Activated CD8-positive, alpha-beta T cell treated with anti-CD3 and anti-CD28 coated beads for 36 hours (primary cell): ENCODE measurements at regions of chr16 and their contacts with region 1.

Region 1: DNA sequence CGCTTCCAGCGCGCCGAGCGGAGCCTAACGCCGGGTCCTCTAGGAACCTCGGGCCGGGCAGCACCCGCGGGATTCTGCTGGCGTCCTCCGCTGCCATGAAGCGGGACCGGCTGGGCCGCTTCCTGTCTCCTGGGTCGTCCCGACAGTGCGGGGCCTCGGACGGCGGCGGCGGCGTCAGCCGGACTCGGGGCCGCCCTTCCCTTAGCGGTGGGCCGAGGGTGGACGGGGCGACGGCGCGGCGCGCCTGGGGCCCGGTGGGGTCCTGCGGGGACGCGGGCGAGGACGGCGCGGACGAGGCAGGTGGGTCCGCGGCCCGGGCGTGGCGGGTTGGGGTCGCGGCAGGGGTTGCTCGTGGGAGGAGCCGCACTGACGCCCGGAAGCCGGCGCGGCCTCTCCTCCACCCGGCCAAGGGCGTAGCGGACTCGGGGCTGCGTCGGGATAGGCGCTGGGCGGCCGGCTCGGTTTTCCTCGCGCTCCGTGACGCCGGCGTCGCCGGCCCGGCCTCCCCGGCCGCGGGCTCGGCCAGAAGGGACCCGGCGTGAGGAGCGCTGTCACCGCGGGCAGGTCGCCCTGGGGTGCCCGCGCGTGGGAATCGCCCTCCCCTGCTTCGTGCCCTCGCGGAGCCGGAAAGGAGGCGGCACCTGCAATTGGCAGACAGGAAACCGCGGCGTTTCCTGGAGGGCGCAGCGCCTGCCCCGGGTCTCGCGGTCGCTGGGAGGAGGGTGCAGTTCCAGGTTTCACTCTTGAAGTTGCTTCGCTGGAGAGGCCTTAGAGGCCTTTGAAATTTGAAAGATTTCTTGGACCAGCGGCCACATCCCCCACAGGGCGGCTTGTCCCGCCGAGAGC is 432 bp downstream of the ZNF276 start:
- DNase-seq: peak; percentile 85
- ATAC-seq: peak; percentile 17
- H3K4me3 Mint-ChIP-seq: peak overlapping the region; percentile 82
- H3K27ac Mint-ChIP-seq: peak overlapping the region; percentile 86
- H3K4me1 Mint-ChIP-seq: peaks cover 44% of the 10 kb centered on the region
- H3K27me3 Mint-ChIP-seq: no peaks in the 10 kb centered on the region
- CTCF ChIP-seq: no peak

Region 2: GRCh38 chr16:89732142-89732917 is 10.6 kb after region 1 on chr16:
- CTCF ChIA-PET with region 1: no interaction called
- POLR2A ChIA-PET with region 1: interaction called, 23 read pairs
- intact Hi-C with region 1: no loop called
- DNase-seq: no peak
- ATAC-seq: no peak
- H3K4me3 Mint-ChIP-seq: no peak overlapping the region
- H3K27ac Mint-ChIP-seq: no peak overlapping the region
- H3K4me1 Mint-ChIP-seq: peaks cover 32% of the 10 kb centered on the region
- H3K27me3 Mint-ChIP-seq: no peaks in the 10 kb centered on the region
- CTCF ChIP-seq: no peak